PC-3 (cell line): ENCODE measurements at regions of chr12 and their contacts with region 1.

Region 1: GRCh38 chr12:29807125-29807524 is 23.4 kb upstream of the TMTC1 start:
- DNase-seq: peak; percentile 84
- ATAC-seq: peak; percentile 100
- H3K4me3 ChIP-seq: no peak overlapping the region
- H3K27ac ChIP-seq: no peak overlapping the region
- H3K4me1 ChIP-seq: peaks cover 5% of the 10 kb centered on the region
- H3K27me3 ChIP-seq: no peaks in the 10 kb centered on the region
- CTCF ChIP-seq: no peak

Region 2: GRCh38 chr12:29921307-29921706 is 114.2 kb after region 1 on chr12:
- CTCF ChIA-PET with region 1: no interaction called
- POLR2A ChIA-PET with region 1: no interaction called
- intact Hi-C with region 1: loop called (anchors 10 kb)
- DNase-seq: peak; percentile 69
- ATAC-seq: peak; percentile 99
- H3K4me3 ChIP-seq: no peak overlapping the region
- H3K27ac ChIP-seq: no peak overlapping the region
- H3K4me1 ChIP-seq: peaks cover 3% of the 10 kb centered on the region; the same call in 1 of the 2 replicates
- H3K27me3 ChIP-seq: no peaks in the 10 kb centered on the region
- CTCF ChIP-seq: no peak